Aorta (tissue), 5 donors: ENCODE measurements at regions of chr7 and their contacts with region 1.

Region 1: DNA sequence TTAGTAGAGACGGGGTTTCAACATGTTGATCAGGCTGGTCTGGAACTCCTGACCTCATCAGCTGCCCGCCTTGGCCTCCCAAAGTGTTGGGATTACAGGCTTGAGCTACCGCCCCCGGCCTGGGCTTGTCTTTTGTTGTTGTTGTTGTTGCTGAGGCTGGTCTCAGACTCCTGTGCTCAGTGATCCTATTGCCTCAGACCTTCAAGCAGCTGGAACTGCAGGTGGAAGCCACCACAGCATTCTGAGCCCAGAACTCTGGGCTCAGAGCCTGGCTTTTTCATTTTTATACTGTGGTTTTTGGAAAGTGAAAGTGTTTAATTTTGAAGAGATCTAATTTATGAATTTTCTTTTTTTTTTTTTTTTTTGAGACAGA is 16.2 kb upstream of the DNAJB6 start:
- DNase-seq: no peak
- ATAC-seq: no peak
- H3K4me3 ChIP-seq: no peak overlapping the region
- H3K27ac ChIP-seq: no peak overlapping the region
- H3K4me1 ChIP-seq: no peaks in the 10 kb centered on the region
- H3K27me3 ChIP-seq: no peaks in the 10 kb centered on the region

Region 2: GRCh38 chr7:156656598-156656997 is 664.0 kb before region 1 on chr7:
- intact Hi-C with region 1: no loop called
- DNase-seq: no peak
- ATAC-seq: no peak
- H3K4me3 ChIP-seq: no peak overlapping the region
- H3K27ac ChIP-seq: no peak overlapping the region
- H3K4me1 ChIP-seq: no peaks in the 10 kb centered on the region
- H3K27me3 ChIP-seq: no peaks in the 10 kb centered on the region

Region 3: DNA sequence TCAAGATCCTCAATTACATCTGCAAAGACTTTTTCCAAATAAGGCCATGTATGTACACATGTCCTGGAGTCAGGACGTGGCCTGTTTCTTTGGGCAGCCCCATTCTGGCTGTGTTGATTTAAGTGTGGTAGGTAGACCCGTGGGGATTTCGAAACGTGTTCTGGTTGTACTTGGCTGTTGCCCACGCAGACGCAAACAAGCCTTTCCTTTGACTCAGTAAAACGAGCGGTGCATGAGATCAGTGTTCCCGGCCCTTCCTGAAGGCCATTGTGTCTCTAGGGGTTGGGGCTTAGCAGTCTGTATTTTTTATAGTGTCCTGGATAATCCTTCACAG is 48.6 kb before region 1 on chr7:
- intact Hi-C with region 1: no loop called
- DNase-seq: peak; percentile 85 to 91
- ATAC-seq: peak; percentile 77
- H3K4me3 ChIP-seq: no peak overlapping the region
- H3K27ac ChIP-seq: peak overlapping the region; percentile 64 to 79
- H3K4me1 ChIP-seq: peaks cover 0 to 4% of the 10 kb centered on the region in 2 donors
- H3K27me3 ChIP-seq: no peaks in the 10 kb centered on the region

Region 4: GRCh38 chr7:157282141-157282801 is 38.3 kb before region 1 on chr7:
- intact Hi-C with region 1: loop called in 1 of 2 experiments (anchors 5 kb)
- DNase-seq: no peak
- ATAC-seq: no peak
- H3K4me3 ChIP-seq: no peak overlapping the region
- H3K27ac ChIP-seq: no peak overlapping the region
- H3K4me1 ChIP-seq: no peaks in the 10 kb centered on the region
- H3K27me3 ChIP-seq: no peaks in the 10 kb centered on the region